Posterior vena cava (tissue), 2 donors: ENCODE measurements at regions of chr12 and their contacts with region 1.

Region 1: GRCh38 chr12:43407816-43408645 is 144.0 kb downstream of the ADAMTS20 start:
- DNase-seq: no peak

Region 2: GRCh38 chr12:43238281-43238680 is 169.8 kb before region 1 on chr12:
- intact Hi-C with region 1: no loop called
- DNase-seq: no peak

Region 3: GRCh38 chr12:43396671-43397070 is 11.4 kb before region 1 on chr12:
- intact Hi-C with region 1: loop called in 1 of 2 experiments (anchors 1 kb)
- DNase-seq: no peak

Region 4: DNA sequence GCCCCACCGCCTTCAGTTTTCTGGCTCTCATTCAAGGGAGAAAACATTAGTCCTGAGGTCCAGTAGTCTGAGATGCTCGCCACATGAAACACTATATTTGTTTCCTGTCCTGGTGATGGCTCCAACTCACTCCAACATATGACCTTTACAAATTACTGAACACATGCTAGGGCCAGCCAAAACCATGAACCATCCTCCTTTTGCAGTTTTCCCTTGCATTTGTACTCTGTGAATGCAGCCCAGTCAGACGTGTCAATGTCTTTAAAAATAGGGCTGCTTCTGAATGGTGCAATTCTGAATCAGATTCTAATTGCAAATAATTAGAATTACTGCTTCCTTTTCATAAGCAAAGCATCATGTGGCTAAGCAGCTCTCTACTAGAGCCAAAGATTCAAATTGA is 108.0 kb after region 1 on chr12:
- intact Hi-C with region 1: no loop called
- DNase-seq: no peak